Breast epithelium (tissue), 4 donors: ENCODE measurements at regions of chr9 and their contacts with region 1.

Region 1: DNA sequence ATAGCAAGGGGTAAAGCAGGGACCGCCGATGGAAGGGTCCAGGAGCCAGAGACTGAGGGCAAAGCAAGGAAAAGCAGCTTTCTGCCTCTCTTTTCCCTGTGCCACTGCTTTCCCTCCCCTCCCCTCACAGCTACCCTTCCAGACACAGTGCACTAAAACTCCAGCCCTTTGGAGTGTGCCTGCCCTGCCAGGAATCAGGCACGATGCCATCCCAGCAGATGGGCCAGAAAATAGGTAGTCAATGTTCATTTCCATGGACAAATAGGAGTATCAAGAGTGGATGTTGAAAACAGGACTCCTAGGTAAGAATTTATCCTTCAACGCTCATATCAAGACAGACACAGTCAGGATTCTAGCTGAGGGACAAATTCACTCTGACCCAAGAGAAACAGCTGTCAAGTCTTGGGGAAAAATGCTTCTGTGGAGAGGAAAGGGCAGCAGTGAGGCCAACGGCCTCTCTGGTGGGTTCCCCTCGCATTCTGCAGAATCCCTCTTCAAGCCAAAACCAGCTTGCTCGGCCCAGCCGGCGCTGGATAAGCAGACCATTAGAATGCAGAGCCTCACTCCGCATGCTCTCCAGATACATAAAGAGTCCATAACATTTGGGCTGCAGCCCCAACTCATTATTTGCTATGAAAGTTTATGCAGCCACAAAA is 138.0 kb downstream of the CAAP1 start:
- DNase-seq: no peak
- H3K4me3 ChIP-seq: no peak overlapping the region
- H3K27ac ChIP-seq: no peak overlapping the region
- H3K4me1 ChIP-seq: no peaks in the 10 kb centered on the region
- H3K27me3 ChIP-seq: no peaks in the 10 kb centered on the region
- CTCF ChIP-seq: no peak
- POLR2A ChIP-seq: no peak

Region 2: GRCh38 chr9:25755951-25756350 is 998.7 kb before region 1 on chr9:
- intact Hi-C with region 1: loop called (anchors 5 kb)
- DNase-seq: no peak
- H3K4me3 ChIP-seq: no peak overlapping the region
- H3K27ac ChIP-seq: no peak overlapping the region
- H3K4me1 ChIP-seq: no peaks in the 10 kb centered on the region
- H3K27me3 ChIP-seq: no peaks in the 10 kb centered on the region
- CTCF ChIP-seq: no peak
- POLR2A ChIP-seq: no peak